MCF 10A (cell line): ENCODE measurements at regions of chr1 and their contacts with region 1.

Region 1: DNA sequence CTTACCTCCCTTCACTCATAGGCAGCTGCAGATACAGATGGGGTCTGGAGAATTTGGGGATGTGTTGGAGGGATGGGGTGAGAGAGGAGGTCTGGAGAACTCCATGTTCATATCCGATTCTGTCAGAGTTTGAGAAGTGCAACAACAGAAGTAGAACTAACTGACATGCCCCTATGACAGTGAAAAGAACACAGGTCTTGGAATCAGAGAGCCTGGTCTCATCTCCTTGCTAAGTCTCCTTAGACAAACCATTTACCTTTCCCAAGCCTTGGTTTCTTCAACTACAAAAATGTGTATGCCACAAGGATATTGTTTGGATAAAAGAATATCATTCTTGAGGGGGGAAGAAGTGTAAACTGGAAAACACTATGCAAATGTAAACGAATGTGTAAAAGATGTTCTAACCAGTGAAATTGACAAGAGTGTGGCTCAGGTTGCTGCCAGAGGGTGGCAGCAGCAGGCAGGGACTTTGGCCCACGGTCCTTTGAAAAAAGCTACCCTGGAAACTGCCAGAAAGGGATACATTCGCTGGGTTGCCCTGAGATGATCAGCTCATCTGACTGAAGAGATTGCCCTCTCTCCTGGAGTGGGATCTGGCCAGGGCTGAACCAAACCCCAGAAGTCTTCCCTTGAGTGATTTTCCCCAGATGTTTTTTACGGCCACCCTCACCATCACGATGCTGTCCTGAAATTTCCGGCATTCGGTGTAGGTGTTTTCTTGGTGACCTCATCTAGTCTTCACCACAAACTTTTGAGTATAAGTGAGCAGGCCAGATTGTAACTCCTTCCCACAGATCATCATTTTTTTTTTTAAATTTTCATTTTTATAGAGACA is 17.0 kb upstream of the CD2 start:
- DNase-seq: peak; percentile 60
- H3K4me3 Mint-ChIP-seq: no peak overlapping the region
- H3K27ac Mint-ChIP-seq: no peak overlapping the region
- H3K4me1 Mint-ChIP-seq: no peaks in the 10 kb centered on the region
- H3K27me3 Mint-ChIP-seq: peaks cover 11% of the 10 kb centered on the region
- CTCF ChIP-seq: peak; percentile 87

Region 2: DNA sequence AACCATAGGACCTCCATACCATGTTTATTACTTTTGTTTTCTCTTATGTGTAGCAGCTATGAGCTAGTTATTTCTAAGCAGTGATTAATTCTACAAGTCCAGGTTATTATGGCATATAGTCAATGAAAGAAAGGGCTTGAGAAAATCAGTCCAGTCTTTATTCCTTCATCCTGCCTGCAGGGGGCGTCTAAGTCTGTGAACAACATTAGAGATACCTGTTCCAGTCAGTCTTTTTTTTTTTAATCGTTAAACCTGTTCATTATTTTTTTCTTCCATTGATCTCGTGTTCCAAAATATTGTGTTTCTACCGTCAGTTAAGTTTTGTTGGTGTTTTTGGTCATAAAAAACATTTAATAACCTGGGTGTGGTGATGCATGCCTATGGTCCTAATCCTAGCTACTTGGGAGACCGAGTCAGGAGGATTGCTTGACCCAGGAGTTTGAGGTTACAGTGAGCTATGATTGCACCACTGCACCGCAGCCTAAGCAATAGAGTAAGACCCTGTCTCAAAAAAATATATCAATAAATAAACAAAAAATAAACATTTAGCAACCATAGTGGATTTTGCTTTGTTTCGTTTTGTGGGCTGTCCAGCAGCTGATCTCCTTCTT is 12.4 kb before region 1 on chr1:
- CTCF ChIA-PET with region 1: interaction called, 42 read pairs
- POLR2A ChIA-PET with region 1: interaction called, 5 read pairs
- intact Hi-C with region 1: no loop called
- DNase-seq: peak; percentile 86
- H3K4me3 Mint-ChIP-seq: no peak overlapping the region
- H3K27ac Mint-ChIP-seq: no peak overlapping the region
- H3K4me1 Mint-ChIP-seq: peaks cover 7% of the 10 kb centered on the region
- H3K27me3 Mint-ChIP-seq: no peaks in the 10 kb centered on the region
- CTCF ChIP-seq: peak; percentile 69

Region 3: GRCh38 chr1:116763787-116764465 is 26.7 kb after region 1 on chr1:
- CTCF ChIA-PET with region 1: interaction called, 10 read pairs
- POLR2A ChIA-PET with region 1: no interaction called
- intact Hi-C with region 1: no loop called
- DNase-seq: peak; percentile 47
- H3K4me3 Mint-ChIP-seq: no peak overlapping the region
- H3K27ac Mint-ChIP-seq: no peak overlapping the region
- H3K4me1 Mint-ChIP-seq: no peaks in the 10 kb centered on the region
- H3K27me3 Mint-ChIP-seq: no peaks in the 10 kb centered on the region
- CTCF ChIP-seq: peak; percentile 26

Region 4: DNA sequence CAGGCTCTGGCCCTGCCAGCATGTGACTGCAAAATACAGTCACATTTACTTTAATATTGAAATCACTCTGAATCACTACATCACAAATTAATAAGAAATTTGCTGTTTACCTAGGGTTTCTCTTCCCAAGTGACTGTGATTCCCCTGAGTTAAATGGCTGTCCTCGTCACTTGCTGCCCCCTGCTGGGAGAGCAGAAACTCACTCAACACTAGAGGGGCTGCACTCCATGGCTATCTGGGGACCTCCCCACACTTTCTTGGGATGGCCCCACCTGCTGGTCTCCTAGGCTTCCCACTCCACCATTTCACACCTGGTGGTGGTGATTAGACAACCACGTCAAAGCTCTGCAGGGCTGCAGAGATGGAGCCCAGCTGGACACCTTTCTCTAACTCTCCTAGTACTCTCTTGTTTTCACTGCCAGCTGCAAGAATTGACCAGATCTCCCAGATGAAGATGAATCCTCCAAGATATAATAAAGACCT is 80.4 kb after region 1 on chr1:
- CTCF ChIA-PET with region 1: interaction called, 7 read pairs
- POLR2A ChIA-PET with region 1: interaction called, 3 read pairs
- intact Hi-C with region 1: loop called (anchors 1 kb)
- DNase-seq: peak; percentile 77
- H3K4me3 Mint-ChIP-seq: no peak overlapping the region
- H3K27ac Mint-ChIP-seq: no peak overlapping the region
- H3K4me1 Mint-ChIP-seq: peaks cover 10% of the 10 kb centered on the region
- H3K27me3 Mint-ChIP-seq: no peaks in the 10 kb centered on the region
- CTCF ChIP-seq: peak; percentile 56

Region 5: GRCh38 chr1:116853670-116854402 is 116.6 kb after region 1 on chr1:
- CTCF ChIA-PET with region 1: interaction called, 14 read pairs
- POLR2A ChIA-PET with region 1: interaction called, 4 read pairs
- intact Hi-C with region 1: loop called (anchors 1 kb)
- DNase-seq: peak; percentile 68
- H3K4me3 Mint-ChIP-seq: no peak overlapping the region
- H3K27ac Mint-ChIP-seq: peak overlapping the region; percentile 50
- H3K4me1 Mint-ChIP-seq: peaks cover 15% of the 10 kb centered on the region
- H3K27me3 Mint-ChIP-seq: no peaks in the 10 kb centered on the region
- CTCF ChIP-seq: no peak

Region 6: GRCh38 chr1:116934586-116935207 is 197.5 kb after region 1 on chr1:
- CTCF ChIA-PET with region 1: interaction called, 7 read pairs
- POLR2A ChIA-PET with region 1: no interaction called
- intact Hi-C with region 1: loop called (anchors 10 kb)
- DNase-seq: no peak
- H3K4me3 Mint-ChIP-seq: no peak overlapping the region
- H3K27ac Mint-ChIP-seq: no peak overlapping the region
- H3K4me1 Mint-ChIP-seq: peaks cover 16% of the 10 kb centered on the region
- H3K27me3 Mint-ChIP-seq: no peaks in the 10 kb centered on the region
- CTCF ChIP-seq: peak; percentile 19